PC-9 (cell line): ENCODE measurements at regions of chr5 and their contacts with region 1.

Region 1: DNA sequence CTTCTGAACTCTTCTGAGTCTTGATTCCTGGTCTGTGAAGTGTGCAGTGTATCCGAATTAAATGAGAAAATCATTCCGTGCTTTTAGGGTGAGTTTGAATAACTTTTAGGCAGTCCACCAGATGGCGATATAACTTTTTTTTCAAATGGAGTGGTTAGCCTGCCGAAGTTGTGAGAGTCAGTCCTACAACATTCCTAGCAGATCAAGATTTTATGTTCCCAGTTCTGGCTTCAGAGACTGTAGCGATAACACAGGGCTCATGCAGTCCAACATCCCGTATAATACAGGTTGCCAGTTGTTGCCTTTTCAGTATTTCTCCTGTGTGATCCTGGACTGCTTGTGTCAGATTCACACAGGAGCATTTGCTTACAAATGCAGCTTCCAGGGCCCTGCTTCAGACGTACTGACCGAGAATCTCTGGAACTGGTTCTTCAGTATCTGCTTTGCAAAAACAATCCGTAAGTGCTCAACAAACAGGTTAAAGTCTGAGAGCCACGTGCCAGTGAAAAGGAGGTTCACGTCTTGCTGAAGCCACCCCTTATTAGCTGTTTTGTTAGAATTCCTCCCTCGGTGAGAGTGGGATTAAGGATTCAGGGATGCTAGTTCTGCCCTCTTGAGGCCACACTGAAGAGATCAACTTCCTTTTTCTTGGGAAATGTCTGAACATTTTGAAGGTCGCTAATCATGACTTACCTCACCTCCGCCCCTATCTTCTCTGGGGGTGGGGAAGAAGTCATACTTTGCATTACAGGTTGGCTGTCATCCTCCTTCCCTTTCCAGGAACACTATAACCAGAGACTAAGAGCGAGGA is 22.8 kb downstream of the SMIM3 start:
- DNase-seq: peak; percentile 43 to 44
- H3K4me3 ChIP-seq: peak overlapping the region; percentile 7; the same call in 1 of the 2 replicates
- H3K27ac ChIP-seq: no peak overlapping the region
- H3K4me1 ChIP-seq: no peaks in the 10 kb centered on the region
- H3K27me3 ChIP-seq: peaks cover 5% of the 10 kb centered on the region; the same call in 1 of the 2 replicates
- CTCF ChIP-seq: peak; percentile 73

Region 2: GRCh38 chr5:150449517-150450339 is 351.6 kb before region 1 on chr5 and contains the start of gene RPS14:
- CTCF ChIA-PET with region 1: no interaction called
- POLR2A ChIA-PET with region 1: no interaction called
- intact Hi-C with region 1: loop called (anchors 10 kb)
- DNase-seq: peak; percentile 82 to 94
- H3K4me3 ChIP-seq: peak within 1 kb of the TSS; percentile 93
- H3K27ac ChIP-seq: peak within 1 kb of the TSS; percentile 86
- H3K4me1 ChIP-seq: peaks cover 12% of the 10 kb centered on the region
- H3K27me3 ChIP-seq: no peaks in the 10 kb centered on the region
- CTCF ChIP-seq: peak; percentile 98
- total RNA-seq, gene RPS14: 2,907 and 3,838 TPM in 2 replicates

Region 3: GRCh38 chr5:150560401-150561193 is 240.7 kb before region 1 on chr5:
- CTCF ChIA-PET with region 1: no interaction called
- POLR2A ChIA-PET with region 1: no interaction called
- intact Hi-C with region 1: loop called (anchors 1 kb)
- DNase-seq: peak; percentile 62 to 82
- H3K4me3 ChIP-seq: no peak overlapping the region
- H3K27ac ChIP-seq: no peak overlapping the region
- H3K4me1 ChIP-seq: 0 out of 2 replicates have a peak, but pooled peaks cover 7% of the 10 kb centered on the region
- H3K27me3 ChIP-seq: no peaks in the 10 kb centered on the region
- CTCF ChIP-seq: peak; percentile 90

Region 4: DNA sequence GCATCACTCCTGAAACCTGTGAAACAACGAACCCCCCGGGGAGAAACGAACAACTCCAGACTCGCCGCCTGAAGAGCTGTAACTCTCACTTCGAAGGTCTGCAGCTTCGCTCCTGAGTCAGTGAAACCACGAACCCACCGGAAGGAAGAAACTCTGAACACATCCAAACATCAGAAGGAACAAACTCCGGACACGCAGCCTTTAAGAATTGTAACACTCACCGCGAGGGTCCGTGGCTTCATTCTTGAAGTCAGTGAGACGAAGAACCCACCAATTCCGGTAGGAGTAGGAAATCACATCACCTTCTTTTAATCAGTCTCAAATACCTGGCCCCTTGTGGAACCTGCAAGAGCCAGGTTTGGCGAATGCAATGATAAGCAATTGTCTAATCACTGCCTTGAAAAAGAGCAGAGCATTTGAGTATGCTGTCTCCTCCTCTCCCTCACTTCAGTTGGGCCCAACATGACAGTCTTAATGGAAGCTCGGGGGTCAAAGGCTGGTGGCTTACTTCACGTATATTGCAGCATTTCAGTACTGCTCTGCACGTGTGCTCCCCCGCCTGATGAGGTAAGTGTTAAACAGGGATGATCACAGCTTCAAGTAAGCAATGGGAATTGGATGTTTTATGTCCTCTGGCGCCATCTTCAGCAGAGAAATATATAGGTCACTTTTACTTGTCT is 45.5 kb after region 1 on chr5:
- CTCF ChIA-PET with region 1: no interaction called
- POLR2A ChIA-PET with region 1: no interaction called
- intact Hi-C with region 1: loop called (anchors 1 kb)
- DNase-seq: peak; percentile 38 to 63
- H3K4me3 ChIP-seq: no peak overlapping the region
- H3K27ac ChIP-seq: no peak overlapping the region
- H3K4me1 ChIP-seq: no peaks in the 10 kb centered on the region
- H3K27me3 ChIP-seq: peaks cover 2% of the 10 kb centered on the region; the same call in 1 of the 2 replicates
- CTCF ChIP-seq: peak; percentile 79

Region 5: GRCh38 chr5:151115274-151115905 is 314.1 kb after region 1 on chr5:
- CTCF ChIA-PET with region 1: no interaction called
- POLR2A ChIA-PET with region 1: no interaction called
- intact Hi-C with region 1: loop called (anchors 5 kb)
- DNase-seq: peak; percentile 50 to 76
- H3K4me3 ChIP-seq: no peak overlapping the region
- H3K27ac ChIP-seq: no peak overlapping the region
- H3K4me1 ChIP-seq: no peaks in the 10 kb centered on the region; the same call in 1 of the 2 replicates
- H3K27me3 ChIP-seq: no peaks in the 10 kb centered on the region
- CTCF ChIP-seq: peak; percentile 99

Region 6: GRCh38 chr5:151239237-151239861 is 438.0 kb after region 1 on chr5:
- CTCF ChIA-PET with region 1: no interaction called
- POLR2A ChIA-PET with region 1: no interaction called
- intact Hi-C with region 1: loop called (anchors 10 kb)
- DNase-seq: peak in 1 of 2 experiments; percentile 63
- H3K4me3 ChIP-seq: no peak overlapping the region
- H3K27ac ChIP-seq: no peak overlapping the region
- H3K4me1 ChIP-seq: peaks cover 8% of the 10 kb centered on the region
- H3K27me3 ChIP-seq: 0 out of 2 replicates have a peak, but pooled peaks cover 4% of the 10 kb centered on the region
- CTCF ChIP-seq: peak; percentile 88

Region 7: GRCh38 chr5:151523335-151523734 is 722.0 kb after region 1 on chr5:
- CTCF ChIA-PET with region 1: no interaction called
- POLR2A ChIA-PET with region 1: no interaction called
- intact Hi-C with region 1: loop called (anchors 2 kb)
- DNase-seq: peak in 1 of 2 experiments; percentile 41
- H3K4me3 ChIP-seq: no peak overlapping the region
- H3K27ac ChIP-seq: no peak overlapping the region
- H3K4me1 ChIP-seq: peaks cover 5% of the 10 kb centered on the region; the same call in 1 of the 2 replicates
- H3K27me3 ChIP-seq: no peaks in the 10 kb centered on the region
- CTCF ChIP-seq: peak; percentile 76